Breast epithelium (tissue), 4 donors: ENCODE measurements at regions of chr1 and their contacts with region 1.

Region 1: DNA sequence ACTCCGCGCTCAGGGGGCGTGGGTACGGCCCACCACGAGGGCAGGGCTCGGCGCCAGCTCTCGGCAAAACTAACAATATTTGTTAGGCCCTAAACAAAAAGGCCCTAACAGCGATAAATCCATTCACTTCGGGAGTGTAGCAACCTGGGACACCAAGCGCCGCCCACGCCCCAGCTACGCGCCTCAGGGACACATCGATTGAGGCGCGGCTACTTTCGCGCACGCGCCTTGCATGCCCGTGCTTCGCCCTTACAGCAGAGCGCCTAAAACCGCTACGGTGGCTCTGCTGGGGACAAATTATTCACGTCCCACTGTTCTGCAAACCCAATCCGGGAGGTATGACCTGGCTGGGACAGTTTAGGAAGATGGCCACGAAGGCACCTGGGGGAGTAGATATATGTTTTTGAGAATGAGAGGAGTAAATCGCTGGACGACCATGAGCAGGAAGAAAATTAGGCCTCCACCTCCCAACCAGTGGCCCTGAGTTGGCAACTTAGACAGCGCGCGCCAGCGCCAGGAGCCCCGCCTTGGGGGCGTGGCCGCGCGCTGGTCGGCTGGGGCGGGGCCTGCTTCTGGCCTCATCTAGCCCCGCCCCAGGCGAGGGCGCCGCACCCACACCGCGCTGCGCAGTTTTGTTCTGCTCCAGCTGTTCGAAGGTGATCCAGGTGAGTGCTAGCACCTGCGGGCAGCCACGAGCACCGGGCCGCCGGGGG is at the start of gene MGST3:
- DNase-seq: peak; percentile 89 to 92
- H3K4me3 ChIP-seq: peak within 1 kb of the TSS; percentile 79 to 89 (median 79)
- H3K27ac ChIP-seq: peak within 1 kb of the TSS; percentile 92 to 94
- H3K4me1 ChIP-seq: peaks cover 0 to 8% of the 10 kb centered on the region in 2 donors
- H3K27me3 ChIP-seq: no peaks in the 10 kb centered on the region
- CTCF ChIP-seq: no peak
- POLR2A ChIP-seq: peak; percentile 43
- total RNA-seq, gene MGST3: 140 to 318 (median 251) TPM

Region 2: GRCh38 chr1:165698761-165699052 is 67.9 kb after region 1 on chr1:
- intact Hi-C with region 1: no loop called
- DNase-seq: no peak
- H3K4me3 ChIP-seq: peak overlapping the region; percentile 68 to 77 (median 69)
- H3K27ac ChIP-seq: peak overlapping the region; percentile 88 to 94
- H3K4me1 ChIP-seq: peaks cover 0 to 13% of the 10 kb centered on the region in 2 donors
- H3K27me3 ChIP-seq: no peaks in the 10 kb centered on the region
- CTCF ChIP-seq: no peak
- POLR2A ChIP-seq: no peak

Region 3: GRCh38 chr1:165768513-165769394 is 138.0 kb after region 1 on chr1 and contains the start of gene TMCO1:
- intact Hi-C with region 1: loop called (anchors 10 kb)
- DNase-seq: peak; percentile 90 to 96
- H3K4me3 ChIP-seq: peak within 1 kb of the TSS; percentile 67 to 83 (median 74)
- H3K27ac ChIP-seq: peak within 1 kb of the TSS; percentile 86 to 90
- H3K4me1 ChIP-seq: peaks cover 0 to 9% of the 10 kb centered on the region in 2 donors
- H3K27me3 ChIP-seq: no peaks in the 10 kb centered on the region
- CTCF ChIP-seq: peak in 1 of 3 donors; percentile 11
- POLR2A ChIP-seq: no peak
- total RNA-seq, gene TMCO1: 57.1 to 89.4 (median 68.8) TPM

Region 4: GRCh38 chr1:166233750-166234366 is 603.1 kb after region 1 on chr1:
- intact Hi-C with region 1: no loop called
- DNase-seq: no peak
- H3K4me3 ChIP-seq: no peak overlapping the region
- H3K27ac ChIP-seq: no peak overlapping the region
- H3K4me1 ChIP-seq: no peaks in the 10 kb centered on the region
- H3K27me3 ChIP-seq: no peaks in the 10 kb centered on the region
- CTCF ChIP-seq: no peak
- POLR2A ChIP-seq: no peak